ENCODE measurements at regions of chr20 and their contacts with region 1.

Region 1: GRCh38 chr20:43187476-43188233 is 2.1 kb downstream of the PTPRT start:
- DNase-seq: peak; percentile 95
- H3K4me3 ChIP-seq: peak overlapping the region in 1 of 4 donors; percentile 30
- H3K27ac ChIP-seq: no peak overlapping the region
- H3K4me1 ChIP-seq: peaks cover 13 to 27% (median 20%) of the 10 kb centered on the region in 4 donors
- H3K27me3 ChIP-seq: peaks cover 0 to 78% (median 19%) of the 10 kb centered on the region in 4 donors
- CTCF ChIP-seq: peak; percentile 84 to 93 (median 93)
- EP300 ChIP-seq: no peak
- POLR2A ChIP-seq: no peak

Region 2: DNA sequence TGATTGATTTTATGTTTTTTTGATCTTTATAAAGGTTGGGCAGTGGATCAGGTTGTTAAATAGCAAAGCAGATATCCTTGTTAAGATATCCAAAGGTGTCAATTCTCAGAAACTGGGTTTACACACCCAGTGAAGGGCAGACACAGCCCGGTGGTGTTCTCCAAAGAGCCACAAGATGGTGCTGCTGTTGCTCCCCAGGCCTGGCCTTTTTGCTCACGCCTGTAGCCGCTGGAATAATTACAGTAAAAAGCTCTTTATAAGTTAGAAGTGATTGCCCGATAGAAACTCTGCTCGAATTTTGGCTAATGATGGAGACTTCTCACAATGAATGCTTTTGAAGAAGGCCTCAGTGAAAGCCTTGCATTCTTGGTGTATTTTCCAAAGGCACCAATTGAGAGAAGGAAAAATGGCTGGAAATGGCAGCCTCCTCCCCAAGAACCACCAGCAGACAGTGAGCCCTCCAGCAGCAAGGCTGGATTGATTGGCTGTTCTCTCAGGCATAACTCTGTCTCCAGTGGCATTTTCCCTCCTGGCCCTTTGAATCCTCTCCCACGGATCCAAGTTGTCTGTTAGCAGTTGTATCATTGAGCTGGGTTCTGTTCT is 1449.0 kb before region 1 on chr20:
- intact Hi-C with region 1: loop called (anchors 5 kb)
- DNase-seq: peak; percentile 91
- H3K4me3 ChIP-seq: no peak overlapping the region
- H3K27ac ChIP-seq: no peak overlapping the region
- H3K4me1 ChIP-seq: peaks cover 0 to 5% (median 0%) of the 10 kb centered on the region in 4 donors
- H3K27me3 ChIP-seq: no peaks in the 10 kb centered on the region
- CTCF ChIP-seq: peak; percentile 62 to 89 (median 66)
- EP300 ChIP-seq: no peak
- POLR2A ChIP-seq: no peak

Region 3: DNA sequence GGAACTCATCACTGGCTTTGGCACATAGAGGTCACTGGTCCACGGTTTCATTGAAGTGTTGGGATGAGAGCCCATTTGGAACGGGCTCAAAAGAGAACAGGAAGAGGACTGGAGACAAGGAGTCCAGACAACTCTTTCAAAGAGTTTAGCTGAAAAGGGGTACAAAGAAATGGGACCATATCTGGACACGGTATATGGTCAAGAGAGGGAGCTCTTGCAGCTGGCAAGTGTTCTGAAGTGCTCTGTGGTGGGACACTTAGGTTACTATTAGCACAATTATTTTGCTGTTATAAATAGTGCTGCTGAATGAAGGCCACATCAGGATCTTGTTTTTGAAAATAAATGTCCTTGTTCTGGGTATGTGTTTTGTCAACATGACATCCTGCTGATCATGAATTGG is 375.8 kb after region 1 on chr20:
- intact Hi-C with region 1: no loop called
- DNase-seq: no peak
- H3K4me3 ChIP-seq: no peak overlapping the region
- H3K27ac ChIP-seq: no peak overlapping the region
- H3K4me1 ChIP-seq: no peaks in the 10 kb centered on the region
- H3K27me3 ChIP-seq: no peaks in the 10 kb centered on the region
- CTCF ChIP-seq: no peak
- EP300 ChIP-seq: no peak
- POLR2A ChIP-seq: no peak

Measured in esophagus muscularis mucosa (tissue), 4 donors.